ENCODE measurements at regions of chr3 and their contacts with region 1.

Region 1: GRCh38 chr3:190321789-190322603 is at the start of gene CLDN1:
- DNase-seq: peak; percentile 70
- ATAC-seq: peak; percentile 94
- H3K4me3 ChIP-seq: peak within 1 kb of the TSS; percentile 92 to 96 (median 95)
- H3K27ac ChIP-seq: peak within 1 kb of the TSS; percentile 72
- H3K4me1 ChIP-seq: peaks cover 48% of the 10 kb centered on the region
- H3K27me3 ChIP-seq: no peaks in the 10 kb centered on the region; a peak in 1 of 5 replicates
- CTCF ChIP-seq: peak; percentile 89
- EP300 ChIP-seq: no peak
- POLR2A ChIP-seq: peak; percentile 76 to 84
- RAD21 ChIP-seq: peak; percentile 98
- total RNA-seq, gene CLDN1: 28.4 and 42.7 TPM in 2 replicates

Region 2: DNA sequence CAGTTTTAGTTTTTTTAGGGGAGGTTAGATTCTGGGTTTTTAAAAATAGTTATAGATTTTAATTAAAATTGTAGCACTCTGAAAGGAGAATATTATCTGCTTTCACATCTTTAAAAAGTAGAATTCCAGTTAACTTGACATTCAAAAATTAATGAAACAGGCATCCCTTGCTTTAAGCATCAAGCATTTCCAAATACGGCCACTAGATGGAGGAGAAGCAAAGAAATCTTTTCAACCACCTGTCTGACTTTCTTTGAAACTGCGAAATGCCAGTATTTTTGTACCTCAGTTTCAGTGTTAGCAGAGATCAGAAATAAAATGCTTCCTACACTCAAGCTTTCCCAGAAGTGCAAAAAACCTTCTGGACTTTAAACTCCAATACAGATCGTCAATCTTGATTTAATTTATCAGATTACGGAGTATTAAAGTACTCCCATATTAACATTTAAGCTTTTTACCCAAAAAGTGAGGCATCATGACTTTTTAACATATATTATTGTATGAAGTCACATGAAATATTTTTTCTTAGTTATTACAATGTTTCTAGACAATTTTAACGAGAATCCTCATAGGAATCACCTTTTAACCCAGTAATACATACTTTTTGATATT is 354.6 kb before region 1 on chr3:
- CTCF ChIA-PET with region 1: no interaction called
- POLR2A ChIA-PET with region 1: interaction called, 5 read pairs
- in situ Hi-C with region 1: loop called (anchors 10 kb)
- intact Hi-C with region 1: loop called (anchors 1 kb)
- DNase-seq: peak; percentile 48
- ATAC-seq: peak; percentile 44; the same call in 1 of the 3 replicates
- H3K4me3 ChIP-seq: no peak overlapping the region
- H3K27ac ChIP-seq: no peak overlapping the region
- H3K4me1 ChIP-seq: no peaks in the 10 kb centered on the region
- H3K27me3 ChIP-seq: no peaks in the 10 kb centered on the region; a peak in 1 of 5 replicates
- CTCF ChIP-seq: peak; percentile 71
- EP300 ChIP-seq: no peak
- POLR2A ChIP-seq: no peak
- RAD21 ChIP-seq: no peak

Region 3: GRCh38 chr3:190224863-190225692 is 96.9 kb before region 1 on chr3:
- CTCF ChIA-PET with region 1: interaction called, 22 read pairs
- POLR2A ChIA-PET with region 1: interaction called, 11 read pairs
- in situ Hi-C with region 1: loop called (anchors 5 kb)
- intact Hi-C with region 1: loop called (anchors 1 kb)
- DNase-seq: peak; percentile 29
- ATAC-seq: peak; percentile 70
- H3K4me3 ChIP-seq: no peak overlapping the region
- H3K27ac ChIP-seq: no peak overlapping the region
- H3K4me1 ChIP-seq: no peaks in the 10 kb centered on the region
- H3K27me3 ChIP-seq: peaks cover 0 to 4% of the 10 kb centered on the region in 2 experiments; a peak in 1 of 5 replicates
- CTCF ChIP-seq: peak; percentile 60
- EP300 ChIP-seq: no peak
- POLR2A ChIP-seq: no peak
- RAD21 ChIP-seq: peak; percentile 29; the same call in 1 of the 2 replicates

Region 4: DNA sequence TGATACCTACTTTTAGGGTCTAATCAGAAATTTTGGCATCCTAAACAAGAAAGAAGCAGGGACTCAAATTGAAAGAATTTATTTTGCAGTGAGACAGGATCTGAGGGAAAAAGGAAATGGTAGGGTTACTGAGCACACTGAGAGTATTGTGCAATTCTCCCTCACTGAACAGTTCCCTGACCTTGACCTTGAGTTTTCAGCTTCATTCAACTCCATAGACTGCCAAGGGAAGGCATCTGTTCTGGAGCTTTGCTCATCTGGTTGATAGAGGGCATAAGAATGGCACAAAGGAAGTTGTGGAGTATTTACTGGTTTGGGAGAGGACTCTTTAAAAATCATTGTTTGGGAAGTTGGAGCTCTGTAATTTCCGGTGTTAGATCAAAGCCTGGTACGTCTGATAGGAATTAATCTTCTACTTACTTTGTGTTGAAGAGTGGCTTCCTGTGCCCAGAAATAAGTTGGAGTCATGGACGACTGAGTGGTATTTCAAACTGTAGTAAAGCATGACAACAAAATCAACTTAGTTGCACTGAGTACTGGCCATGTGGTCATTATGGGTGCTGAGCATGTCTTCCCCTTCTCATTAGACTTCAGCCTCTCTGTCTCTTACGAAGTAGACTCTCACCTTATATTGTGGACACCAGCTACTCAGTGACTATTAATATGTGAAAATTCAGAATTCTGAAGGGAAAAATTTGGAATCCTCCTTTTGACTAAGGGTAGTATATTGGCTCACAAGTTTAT is 40.5 kb before region 1 on chr3:
- CTCF ChIA-PET with region 1: no interaction called
- POLR2A ChIA-PET with region 1: interaction called, 4 read pairs
- in situ Hi-C with region 1: no loop called
- intact Hi-C with region 1: loop called (anchors 2 kb)
- DNase-seq: peak; percentile 76
- ATAC-seq: peak; percentile 86
- H3K4me3 ChIP-seq: no peak overlapping the region
- H3K27ac ChIP-seq: no peak overlapping the region
- H3K4me1 ChIP-seq: peaks cover 17% of the 10 kb centered on the region
- H3K27me3 ChIP-seq: no peaks in the 10 kb centered on the region; a peak in 1 of 5 replicates
- CTCF ChIP-seq: no peak
- EP300 ChIP-seq: 0 out of 4 replicates have a peak, but pooled peaks of 1 of the 2 experiments have one; percentile 27
- POLR2A ChIP-seq: no peak
- RAD21 ChIP-seq: no peak

Region 5: GRCh38 chr3:190339130-190339529 is 17.1 kb after region 1 on chr3:
- CTCF ChIA-PET with region 1: no interaction called
- POLR2A ChIA-PET with region 1: interaction called, 49 read pairs
- in situ Hi-C with region 1: no loop called
- intact Hi-C with region 1: no loop called
- DNase-seq: peak; percentile 37
- ATAC-seq: peak; percentile 78
- H3K4me3 ChIP-seq: no peak overlapping the region
- H3K27ac ChIP-seq: no peak overlapping the region
- H3K4me1 ChIP-seq: peaks cover 30% of the 10 kb centered on the region
- H3K27me3 ChIP-seq: no peaks in the 10 kb centered on the region
- CTCF ChIP-seq: peak; percentile 28
- EP300 ChIP-seq: no peak
- POLR2A ChIP-seq: no peak
- RAD21 ChIP-seq: no peak

Region 6: GRCh38 chr3:190384241-190384863 is 62.4 kb after region 1 on chr3:
- CTCF ChIA-PET with region 1: interaction called, 3 read pairs
- POLR2A ChIA-PET with region 1: interaction called, 9 read pairs
- in situ Hi-C with region 1: loop called (anchors 10 kb)
- intact Hi-C with region 1: loop called (anchors 1 kb)
- DNase-seq: peak; percentile 83
- ATAC-seq: peak; percentile 100
- H3K4me3 ChIP-seq: no peak overlapping the region
- H3K27ac ChIP-seq: no peak overlapping the region
- H3K4me1 ChIP-seq: peaks cover 30% of the 10 kb centered on the region
- H3K27me3 ChIP-seq: 0 out of 5 replicates have a peak, but pooled peaks cover 0 to 1% of the 10 kb centered on the region in 2 experiments
- CTCF ChIP-seq: peak; percentile 89
- EP300 ChIP-seq: no peak
- POLR2A ChIP-seq: no peak
- RAD21 ChIP-seq: peak; percentile 84

Region 7: GRCh38 chr3:190701096-190701532 is 379.1 kb after region 1 on chr3:
- CTCF ChIA-PET with region 1: no interaction called
- POLR2A ChIA-PET with region 1: no interaction called
- in situ Hi-C with region 1: no loop called
- intact Hi-C with region 1: loop called (anchors 5 kb)
- DNase-seq: peak; percentile 91
- ATAC-seq: peak; percentile 99
- H3K4me3 ChIP-seq: no peak overlapping the region; a peak in 1 of 6 replicates
- H3K27ac ChIP-seq: no peak overlapping the region
- H3K4me1 ChIP-seq: peaks cover 23% of the 10 kb centered on the region
- H3K27me3 ChIP-seq: no peaks in the 10 kb centered on the region
- CTCF ChIP-seq: peak; percentile 91
- EP300 ChIP-seq: peak in 1 of 2 experiments; percentile 42; a peak in 1 of 4 replicates
- POLR2A ChIP-seq: no peak
- RAD21 ChIP-seq: peak; percentile 71